ENCODE measurements at regions of chr2 and their contacts with region 1.

Region 1: GRCh38 chr2:20642055-20642971 is 8.6 kb downstream of the HS1BP3 start:
- DNase-seq: peak; percentile 76
- H3K4me3 ChIP-seq: no peak overlapping the region
- H3K27ac ChIP-seq: no peak overlapping the region
- H3K4me1 ChIP-seq: peaks cover 8% of the 10 kb centered on the region
- H3K27me3 ChIP-seq: no peaks in the 10 kb centered on the region
- CTCF ChIP-seq: peak; percentile 98 to 99
- POLR2A ChIP-seq: no peak

Region 2: DNA sequence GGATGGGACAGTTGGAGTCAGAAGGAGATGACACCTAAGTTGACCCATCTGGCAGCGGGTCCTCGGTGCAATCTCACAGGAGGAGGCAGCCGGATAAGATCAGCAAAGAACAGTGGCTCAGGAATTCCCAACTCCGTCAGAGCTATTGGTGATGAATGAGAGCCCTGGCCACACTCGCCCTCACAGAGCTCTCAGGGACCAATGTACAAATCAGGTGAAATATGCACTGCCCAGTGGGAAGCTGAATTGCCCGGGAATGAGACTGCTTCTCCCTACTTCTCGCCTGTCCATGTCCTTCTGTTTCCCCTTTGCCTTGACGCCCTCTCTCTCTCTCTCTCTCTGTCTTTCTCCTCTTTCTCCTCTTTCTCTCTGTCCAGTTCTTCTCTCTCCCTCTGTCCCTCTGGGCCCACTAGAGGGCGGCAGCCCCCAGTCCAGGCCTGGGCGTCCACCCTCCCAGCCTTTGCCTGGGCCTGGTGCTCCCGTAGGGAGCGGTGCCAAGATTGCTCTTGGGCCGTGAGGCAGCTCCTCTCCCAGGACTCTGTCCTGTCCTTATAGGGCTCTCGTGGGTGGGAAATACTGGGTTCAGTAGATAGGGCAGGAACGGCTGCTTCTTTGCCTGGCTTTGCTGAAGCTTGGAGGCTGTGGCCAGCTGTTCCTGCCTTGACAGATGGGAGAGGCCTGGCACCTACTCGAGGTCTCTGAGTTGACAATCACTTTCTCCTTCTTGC is 263.4 kb before region 1 on chr2:
- CTCF ChIA-PET with region 1: interaction called, 66 read pairs
- POLR2A ChIA-PET with region 1: no interaction called
- dilution Hi-C with region 1: no loop called
- intact Hi-C with region 1: loop called (anchors 1 kb)
- DNase-seq: peak; percentile 78
- H3K4me3 ChIP-seq: no peak overlapping the region
- H3K27ac ChIP-seq: no peak overlapping the region
- H3K4me1 ChIP-seq: no peaks in the 10 kb centered on the region
- H3K27me3 ChIP-seq: peaks cover 6 to 9% of the 10 kb centered on the region in 2 experiments
- CTCF ChIP-seq: peak; percentile 87 to 89
- POLR2A ChIP-seq: no peak

Region 3: GRCh38 chr2:20398956-20399567 is 243.3 kb before region 1 on chr2:
- CTCF ChIA-PET with region 1: interaction called, 225 read pairs
- POLR2A ChIA-PET with region 1: no interaction called
- dilution Hi-C with region 1: no loop called
- intact Hi-C with region 1: loop called (anchors 1 kb)
- DNase-seq: no peak
- H3K4me3 ChIP-seq: no peak overlapping the region
- H3K27ac ChIP-seq: no peak overlapping the region
- H3K4me1 ChIP-seq: no peaks in the 10 kb centered on the region
- H3K27me3 ChIP-seq: peaks cover 21% of the 10 kb centered on the region in 2 experiments
- CTCF ChIP-seq: no peak
- POLR2A ChIP-seq: no peak

Region 4: GRCh38 chr2:20424300-20425290 is 217.7 kb before region 1 on chr2:
- CTCF ChIA-PET with region 1: interaction called, 15 read pairs
- POLR2A ChIA-PET with region 1: no interaction called
- dilution Hi-C with region 1: no loop called
- intact Hi-C with region 1: no loop called
- DNase-seq: peak; percentile 51
- H3K4me3 ChIP-seq: no peak overlapping the region
- H3K27ac ChIP-seq: no peak overlapping the region
- H3K4me1 ChIP-seq: peaks cover 12% of the 10 kb centered on the region
- H3K27me3 ChIP-seq: no peaks in the 10 kb centered on the region
- CTCF ChIP-seq: no peak
- POLR2A ChIP-seq: no peak

Region 5: DNA sequence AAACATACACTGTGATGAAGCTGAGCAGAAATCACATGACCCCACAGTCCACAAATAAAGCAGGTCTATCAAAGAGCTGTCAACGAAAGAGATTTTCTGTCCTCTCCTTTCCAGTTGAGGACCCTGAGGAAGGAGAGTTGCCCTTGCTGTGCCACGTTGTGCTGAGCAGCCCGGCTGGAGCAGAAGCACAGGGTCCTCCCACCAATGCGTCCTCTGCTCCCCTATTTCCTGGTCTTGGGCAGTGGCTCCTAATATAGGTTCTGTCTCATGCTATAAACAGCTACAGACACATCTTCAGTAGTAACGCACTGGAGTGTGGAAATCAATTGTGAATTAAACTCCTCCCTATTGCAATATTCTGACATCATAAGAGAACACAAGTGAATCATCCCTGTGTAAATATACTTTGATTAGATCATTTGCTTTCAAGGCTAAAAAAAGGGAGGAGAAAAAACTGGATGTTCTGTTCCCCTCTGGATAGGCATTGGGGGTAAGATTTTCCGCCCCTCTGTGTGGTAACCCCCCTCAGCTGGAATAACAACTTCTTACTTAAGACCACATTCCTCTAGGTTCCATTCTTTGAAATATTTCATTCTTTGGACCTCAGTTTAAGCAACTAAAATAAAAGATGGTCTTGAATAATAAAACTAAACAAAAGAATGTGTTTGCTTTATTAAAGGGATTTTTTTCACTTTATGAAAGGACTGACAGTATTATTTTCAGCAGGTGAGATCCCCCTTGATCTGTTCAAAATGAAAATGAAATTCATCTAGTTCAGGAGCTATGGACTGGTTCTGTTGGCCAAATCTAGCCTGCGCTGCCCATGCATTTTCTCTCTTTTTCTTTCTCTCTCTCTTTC is 203.8 kb before region 1 on chr2:
- CTCF ChIA-PET with region 1: interaction called, 84 read pairs
- POLR2A ChIA-PET with region 1: no interaction called
- dilution Hi-C with region 1: loop called (anchors 10 kb)
- intact Hi-C with region 1: loop called (anchors 1 kb)
- DNase-seq: peak; percentile 66
- H3K4me3 ChIP-seq: peak overlapping the region in 1 of 3 experiments; percentile 30
- H3K27ac ChIP-seq: peak overlapping the region; percentile 54
- H3K4me1 ChIP-seq: peaks cover 17% of the 10 kb centered on the region
- H3K27me3 ChIP-seq: no peaks in the 10 kb centered on the region
- CTCF ChIP-seq: no peak
- POLR2A ChIP-seq: no peak

Region 6: GRCh38 chr2:20617892-20618467 is 24.3 kb before region 1 on chr2:
- CTCF ChIA-PET with region 1: interaction called, 11 read pairs
- POLR2A ChIA-PET with region 1: no interaction called
- dilution Hi-C with region 1: no loop called
- intact Hi-C with region 1: no loop called
- DNase-seq: peak; percentile 98
- H3K4me3 ChIP-seq: no peak overlapping the region
- H3K27ac ChIP-seq: peak overlapping the region; percentile 77
- H3K4me1 ChIP-seq: peaks cover 34% of the 10 kb centered on the region
- H3K27me3 ChIP-seq: no peaks in the 10 kb centered on the region
- CTCF ChIP-seq: peak; percentile 34 to 67
- POLR2A ChIP-seq: no peak

Region 7: DNA sequence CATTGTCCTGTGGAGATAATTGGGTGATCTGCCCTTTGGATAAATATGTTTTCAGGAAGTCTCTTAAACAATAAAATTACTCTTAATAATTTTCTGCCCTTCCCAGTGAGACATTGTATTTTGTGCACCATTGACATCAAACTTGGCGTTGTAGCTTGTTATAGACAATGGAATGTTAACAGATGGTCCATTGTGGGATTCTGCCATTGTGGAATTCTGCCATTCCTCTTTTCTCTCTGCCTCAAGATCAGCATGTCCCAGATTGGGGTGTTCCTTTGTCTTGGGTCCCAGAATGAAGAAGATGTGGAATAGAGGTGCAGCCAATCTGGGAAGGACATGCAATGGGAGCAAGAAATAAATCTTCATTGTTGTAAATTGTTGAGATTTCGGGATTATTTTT is 195.7 kb after region 1 on chr2:
- CTCF ChIA-PET with region 1: no interaction called
- POLR2A ChIA-PET with region 1: no interaction called
- dilution Hi-C with region 1: no loop called
- intact Hi-C with region 1: no loop called
- DNase-seq: no peak
- H3K4me3 ChIP-seq: no peak overlapping the region
- H3K27ac ChIP-seq: no peak overlapping the region
- H3K4me1 ChIP-seq: no peaks in the 10 kb centered on the region
- H3K27me3 ChIP-seq: peaks cover 0 to 2% of the 10 kb centered on the region in 2 experiments
- CTCF ChIP-seq: no peak
- POLR2A ChIP-seq: no peak